ENCODE measurements at regions of chr1 and their contacts with region 1.

Region 1: DNA sequence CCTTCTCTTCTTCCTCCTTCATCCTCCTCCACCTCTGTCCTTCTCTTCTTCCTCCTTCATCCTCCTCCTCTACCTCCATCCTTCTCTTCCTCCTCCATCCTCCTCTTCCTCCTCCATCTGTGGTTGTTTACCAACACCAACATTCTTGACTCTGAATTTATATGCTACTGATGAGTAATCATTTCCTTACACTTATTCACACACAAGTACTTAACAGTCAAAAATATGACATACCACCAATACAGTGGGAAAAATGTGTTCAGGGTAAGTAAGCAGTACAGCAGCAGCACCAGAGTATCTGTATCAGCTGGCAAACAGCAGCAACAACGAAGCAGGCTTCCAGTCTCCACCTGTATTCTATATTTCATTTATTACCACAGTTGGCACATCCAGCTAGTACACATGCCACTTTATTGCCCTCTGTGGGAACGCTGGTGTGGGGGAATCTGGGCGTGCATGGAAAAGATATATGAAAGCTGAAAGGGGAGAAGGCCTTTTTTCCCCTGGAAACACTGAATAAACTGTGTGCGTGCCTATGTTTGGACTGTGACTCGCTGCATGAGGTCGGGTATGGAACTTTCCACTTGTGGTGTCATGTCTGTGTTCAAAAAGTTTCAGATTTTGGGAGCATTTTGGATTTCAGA is 16.0 kb downstream of the ADSS2 start:
- DNase-seq: peak; percentile 81
- ATAC-seq: peak; percentile 72
- H3K4me3 ChIP-seq: peak overlapping the region; percentile 13; the same call in 1 of the 2 replicates
- H3K27ac ChIP-seq: peak overlapping the region; percentile 86
- H3K4me1 ChIP-seq: peaks cover 37% of the 10 kb centered on the region
- H3K27me3 ChIP-seq: no peaks in the 10 kb centered on the region
- CTCF ChIP-seq: no peak

Region 2: GRCh38 chr1:244322791-244323521 is 112.7 kb before region 1 on chr1:
- CTCF ChIA-PET with region 1: no interaction called
- POLR2A ChIA-PET with region 1: no interaction called
- intact Hi-C with region 1: loop called (anchors 1 kb)
- DNase-seq: peak; percentile 99
- ATAC-seq: peak; percentile 92
- H3K4me3 ChIP-seq: peak overlapping the region; percentile 52
- H3K27ac ChIP-seq: peak overlapping the region; percentile 87
- H3K4me1 ChIP-seq: peaks cover 38% of the 10 kb centered on the region
- H3K27me3 ChIP-seq: no peaks in the 10 kb centered on the region
- CTCF ChIP-seq: no peak

Region 3: GRCh38 chr1:244353551-244354091 is 82.1 kb before region 1 on chr1:
- CTCF ChIA-PET with region 1: no interaction called
- POLR2A ChIA-PET with region 1: no interaction called
- intact Hi-C with region 1: loop called (anchors 5 kb)
- DNase-seq: peak; percentile 95
- ATAC-seq: peak; percentile 100
- H3K4me3 ChIP-seq: no peak overlapping the region
- H3K27ac ChIP-seq: peak overlapping the region; percentile 75
- H3K4me1 ChIP-seq: peaks cover 27% of the 10 kb centered on the region
- H3K27me3 ChIP-seq: no peaks in the 10 kb centered on the region
- CTCF ChIP-seq: no peak

Region 4: GRCh38 chr1:244496186-244496585 is 60.5 kb after region 1 on chr1:
- CTCF ChIA-PET with region 1: no interaction called
- POLR2A ChIA-PET with region 1: interaction called, 16 read pairs
- intact Hi-C with region 1: no loop called
- DNase-seq: no peak
- ATAC-seq: no peak
- H3K4me3 ChIP-seq: no peak overlapping the region
- H3K27ac ChIP-seq: no peak overlapping the region
- H3K4me1 ChIP-seq: no peaks in the 10 kb centered on the region
- H3K27me3 ChIP-seq: no peaks in the 10 kb centered on the region
- CTCF ChIP-seq: no peak